Activated naive CD4-positive, alpha-beta T cell treated with anti-CD3 and anti-CD28 coated beads for 36 hours (primary cell): ENCODE measurements at regions of chr9 and their contacts with region 1.

Region 1: DNA sequence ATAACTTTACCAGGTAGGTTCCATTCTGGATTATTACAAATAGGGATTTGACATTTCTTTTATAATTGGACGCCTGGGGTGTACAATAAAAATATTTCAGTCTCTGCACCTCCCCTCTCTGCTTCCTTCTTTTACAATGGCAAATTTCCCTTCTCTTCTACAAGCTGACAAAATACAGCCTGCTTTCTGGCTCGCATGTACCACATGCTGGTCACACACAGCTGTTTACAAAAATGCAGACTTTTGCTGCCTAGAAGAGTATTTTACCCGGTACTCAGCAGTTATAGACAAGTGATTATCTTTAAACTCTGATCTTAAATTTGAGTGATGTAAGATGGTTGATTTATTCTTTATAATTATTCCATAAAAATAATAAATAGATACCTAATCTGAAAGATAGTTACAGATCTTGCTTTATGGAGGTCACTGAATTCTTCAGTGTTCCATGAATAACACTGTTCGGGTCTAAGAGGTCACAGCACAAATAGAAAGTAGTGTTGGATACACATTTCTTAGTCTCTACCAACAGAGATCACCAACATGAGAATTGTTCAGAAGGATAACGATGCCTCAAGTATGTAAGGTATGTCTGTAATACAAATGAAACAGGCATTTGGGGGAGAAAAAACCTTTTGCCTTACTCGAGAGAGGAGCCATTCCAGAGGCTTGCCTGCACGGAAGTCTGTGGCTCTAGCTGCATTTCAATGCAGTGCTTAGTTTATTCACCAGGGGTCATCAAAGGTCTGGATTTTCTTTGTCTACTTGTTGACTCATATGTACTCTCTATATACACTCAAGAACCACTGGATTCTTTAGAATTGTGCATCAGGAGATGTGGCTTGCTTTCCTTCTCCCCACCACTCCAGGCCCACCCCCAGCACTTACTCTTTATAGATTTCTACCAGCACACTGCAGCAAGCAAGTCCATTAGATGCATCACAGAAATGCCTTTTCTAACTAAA is 206.6 kb upstream of the RFX3 start:
- DNase-seq: peak; percentile 55
- H3K4me3 Mint-ChIP-seq: no peak overlapping the region
- H3K27ac Mint-ChIP-seq: no peak overlapping the region
- H3K4me1 Mint-ChIP-seq: peaks cover 18% of the 10 kb centered on the region
- H3K27me3 Mint-ChIP-seq: peaks cover 2% of the 10 kb centered on the region

Region 2: GRCh38 chr9:3240656-3241268 is 491.6 kb before region 1 on chr9:
- CTCF ChIA-PET with region 1: no interaction called
- intact Hi-C with region 1: loop called (anchors 5 kb)
- DNase-seq: peak; percentile 85
- H3K4me3 Mint-ChIP-seq: no peak overlapping the region
- H3K27ac Mint-ChIP-seq: no peak overlapping the region
- H3K4me1 Mint-ChIP-seq: peaks cover 7% of the 10 kb centered on the region
- H3K27me3 Mint-ChIP-seq: no peaks in the 10 kb centered on the region

Region 3: DNA sequence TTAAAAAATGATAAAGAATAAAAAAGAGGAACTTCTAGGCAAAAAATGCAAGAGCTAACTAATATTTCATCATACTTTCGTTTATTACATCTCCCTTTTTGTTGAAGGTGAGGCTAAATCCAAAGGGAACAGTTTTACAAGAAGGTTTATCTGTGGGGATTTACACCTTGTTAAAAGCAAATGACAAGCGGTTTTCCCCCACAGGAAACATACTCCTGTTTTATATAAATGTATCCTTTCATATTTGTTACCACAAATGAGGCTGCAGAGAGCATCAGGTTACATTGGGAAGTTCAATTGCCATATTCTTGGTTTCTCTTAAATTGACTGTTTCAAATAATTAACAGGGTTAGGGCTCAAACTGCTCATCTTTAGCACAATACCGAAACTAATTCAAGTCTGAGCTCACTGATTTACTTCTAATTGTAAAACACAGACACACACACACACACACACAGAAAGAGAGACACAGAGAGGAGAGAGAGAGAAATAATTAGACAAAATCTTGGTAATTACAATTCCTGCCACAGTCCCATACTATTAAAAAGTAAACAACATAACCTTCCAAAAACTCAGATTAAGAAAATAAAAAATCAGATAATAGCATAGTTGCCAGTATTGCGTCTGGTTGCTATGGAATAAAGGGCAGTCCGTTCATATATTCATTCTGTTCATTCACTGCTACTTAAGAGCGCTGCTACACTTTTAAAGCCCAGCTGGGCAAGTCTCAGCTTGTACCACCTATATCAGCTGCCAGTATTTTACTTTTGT is 223.7 kb before region 1 on chr9:
- CTCF ChIA-PET with region 1: no interaction called
- intact Hi-C with region 1: no loop called
- DNase-seq: no peak
- H3K4me3 Mint-ChIP-seq: peak overlapping the region; percentile 51
- H3K27ac Mint-ChIP-seq: peak overlapping the region; percentile 85
- H3K4me1 Mint-ChIP-seq: peaks cover 63% of the 10 kb centered on the region
- H3K27me3 Mint-ChIP-seq: no peaks in the 10 kb centered on the region

Region 4: DNA sequence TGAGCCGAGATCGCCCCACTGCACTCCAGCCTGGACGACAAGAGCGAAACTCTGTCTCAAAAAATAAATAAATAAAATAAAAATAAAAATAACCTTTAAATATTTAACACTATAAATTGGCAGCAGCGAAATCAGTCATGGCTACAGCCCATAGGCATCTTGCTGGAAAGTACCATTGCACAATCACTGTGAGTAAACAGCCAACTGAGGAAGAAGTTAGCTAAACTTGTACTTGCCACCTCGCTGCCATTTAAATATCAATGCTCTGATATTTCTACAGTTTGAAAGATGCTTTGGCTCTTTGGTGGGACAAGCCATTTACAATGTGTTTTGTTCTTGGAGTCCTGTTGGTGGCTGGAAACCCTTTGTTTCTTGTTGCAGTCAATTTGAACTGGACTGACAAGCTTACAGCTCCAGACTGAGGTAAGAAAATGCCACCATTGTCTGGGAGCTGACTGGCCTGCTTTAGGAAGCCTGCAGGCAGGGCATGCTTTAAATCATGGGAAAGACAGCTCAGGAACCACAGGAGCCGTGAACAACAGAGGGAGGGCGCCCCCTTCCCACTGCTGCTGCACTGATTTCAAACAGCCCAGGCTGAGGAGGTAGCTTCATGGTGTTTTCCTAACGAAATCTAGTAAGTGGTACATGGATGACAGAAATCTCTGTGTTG is 116.2 kb after region 1 on chr9:
- CTCF ChIA-PET with region 1: no interaction called
- intact Hi-C with region 1: loop called (anchors 5 kb)
- DNase-seq: peak; percentile 17
- H3K4me3 Mint-ChIP-seq: no peak overlapping the region
- H3K27ac Mint-ChIP-seq: no peak overlapping the region
- H3K4me1 Mint-ChIP-seq: no peaks in the 10 kb centered on the region
- H3K27me3 Mint-ChIP-seq: no peaks in the 10 kb centered on the region

Region 5: DNA sequence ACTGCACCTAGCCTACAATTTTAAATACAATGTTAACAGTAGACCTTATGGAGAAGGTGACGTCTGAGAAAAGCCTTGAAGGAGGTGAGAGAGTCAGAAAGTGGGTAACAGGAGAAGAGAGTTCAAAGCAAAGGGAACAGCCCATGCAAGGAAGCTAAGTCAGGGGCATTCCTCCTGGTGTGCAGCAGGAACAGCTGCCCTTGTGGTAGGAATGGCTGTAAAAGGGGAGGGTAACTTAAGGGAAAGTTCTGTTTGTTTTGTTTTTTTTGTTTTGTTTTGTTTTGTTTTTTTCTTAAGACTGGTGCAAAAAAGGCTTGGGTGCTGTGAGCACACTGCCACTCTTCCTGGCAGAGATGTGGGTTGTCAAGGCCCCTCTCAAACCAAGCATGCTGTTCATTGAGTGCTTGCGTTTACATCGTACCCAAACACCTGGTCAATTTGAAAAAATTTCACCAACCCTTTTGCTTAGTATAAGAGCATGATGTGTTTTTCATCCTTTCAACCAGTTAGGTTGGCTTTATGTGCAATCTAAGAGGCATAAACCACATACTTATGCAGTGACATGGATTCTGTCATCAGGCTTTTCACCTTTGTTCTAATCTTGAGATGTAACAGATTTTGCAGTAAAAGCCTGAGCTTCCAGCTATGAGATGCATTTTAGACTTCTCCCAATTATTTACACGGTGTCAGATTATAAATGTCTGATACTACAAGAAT is 287.8 kb after region 1 on chr9:
- CTCF ChIA-PET with region 1: interaction called, 4 read pairs
- intact Hi-C with region 1: loop called (anchors 10 kb)
- DNase-seq: no peak
- H3K4me3 Mint-ChIP-seq: no peak overlapping the region
- H3K27ac Mint-ChIP-seq: no peak overlapping the region
- H3K4me1 Mint-ChIP-seq: peaks cover 4% of the 10 kb centered on the region
- H3K27me3 Mint-ChIP-seq: peaks cover 3% of the 10 kb centered on the region

Region 6: GRCh38 chr9:4197548-4197947 is 465.2 kb after region 1 on chr9:
- CTCF ChIA-PET with region 1: no interaction called
- intact Hi-C with region 1: no loop called
- DNase-seq: peak; percentile 19
- H3K4me3 Mint-ChIP-seq: no peak overlapping the region
- H3K27ac Mint-ChIP-seq: no peak overlapping the region
- H3K4me1 Mint-ChIP-seq: no peaks in the 10 kb centered on the region
- H3K27me3 Mint-ChIP-seq: peaks cover 4% of the 10 kb centered on the region

Region 7: GRCh38 chr9:4228606-4229005 is 496.2 kb after region 1 on chr9:
- CTCF ChIA-PET with region 1: interaction called, 4 read pairs
- intact Hi-C with region 1: loop called (anchors 1 kb)
- DNase-seq: no peak
- H3K4me3 Mint-ChIP-seq: no peak overlapping the region
- H3K27ac Mint-ChIP-seq: no peak overlapping the region
- H3K4me1 Mint-ChIP-seq: peaks cover 16% of the 10 kb centered on the region
- H3K27me3 Mint-ChIP-seq: no peaks in the 10 kb centered on the region

Region 8: DNA sequence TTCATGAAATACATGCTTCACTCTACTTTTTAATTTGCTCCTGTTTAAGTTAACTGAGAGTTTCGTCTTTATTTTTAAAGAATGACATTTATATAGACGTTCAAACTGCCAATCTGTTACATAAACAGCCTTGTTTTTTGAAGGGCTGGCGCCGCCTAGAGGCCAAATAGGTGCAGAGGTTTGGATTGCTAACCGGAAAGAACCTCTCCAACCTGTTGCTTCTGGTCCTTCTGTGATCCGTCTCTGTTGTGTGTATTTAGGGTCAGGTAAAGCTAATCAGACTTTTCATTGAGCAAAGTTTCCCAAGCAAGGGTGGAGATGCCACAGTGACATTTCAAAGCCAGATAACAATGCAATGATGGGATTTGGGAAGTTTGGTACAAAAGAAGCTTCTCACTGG is 607.0 kb after region 1 on chr9:
- CTCF ChIA-PET with region 1: interaction called, 17 read pairs
- intact Hi-C with region 1: loop called (anchors 1 kb)
- DNase-seq: peak; percentile 96
- H3K4me3 Mint-ChIP-seq: peak overlapping the region; percentile 51
- H3K27ac Mint-ChIP-seq: peak overlapping the region; percentile 69
- H3K4me1 Mint-ChIP-seq: peaks cover 10% of the 10 kb centered on the region
- H3K27me3 Mint-ChIP-seq: no peaks in the 10 kb centered on the region

Region 9: GRCh38 chr9:4375424-4376200 is 643.3 kb after region 1 on chr9:
- CTCF ChIA-PET with region 1: interaction called, 4 read pairs
- intact Hi-C with region 1: loop called (anchors 2 kb)
- DNase-seq: no peak
- H3K4me3 Mint-ChIP-seq: no peak overlapping the region
- H3K27ac Mint-ChIP-seq: no peak overlapping the region
- H3K4me1 Mint-ChIP-seq: no peaks in the 10 kb centered on the region
- H3K27me3 Mint-ChIP-seq: peaks cover 3% of the 10 kb centered on the region